Activated CD4-positive, alpha-beta memory T cell treated with anti-CD3 and anti-CD28 coated beads for 36 hours (primary cell): ENCODE measurements at regions of chr5 and their contacts with region 1.

Region 1: DNA sequence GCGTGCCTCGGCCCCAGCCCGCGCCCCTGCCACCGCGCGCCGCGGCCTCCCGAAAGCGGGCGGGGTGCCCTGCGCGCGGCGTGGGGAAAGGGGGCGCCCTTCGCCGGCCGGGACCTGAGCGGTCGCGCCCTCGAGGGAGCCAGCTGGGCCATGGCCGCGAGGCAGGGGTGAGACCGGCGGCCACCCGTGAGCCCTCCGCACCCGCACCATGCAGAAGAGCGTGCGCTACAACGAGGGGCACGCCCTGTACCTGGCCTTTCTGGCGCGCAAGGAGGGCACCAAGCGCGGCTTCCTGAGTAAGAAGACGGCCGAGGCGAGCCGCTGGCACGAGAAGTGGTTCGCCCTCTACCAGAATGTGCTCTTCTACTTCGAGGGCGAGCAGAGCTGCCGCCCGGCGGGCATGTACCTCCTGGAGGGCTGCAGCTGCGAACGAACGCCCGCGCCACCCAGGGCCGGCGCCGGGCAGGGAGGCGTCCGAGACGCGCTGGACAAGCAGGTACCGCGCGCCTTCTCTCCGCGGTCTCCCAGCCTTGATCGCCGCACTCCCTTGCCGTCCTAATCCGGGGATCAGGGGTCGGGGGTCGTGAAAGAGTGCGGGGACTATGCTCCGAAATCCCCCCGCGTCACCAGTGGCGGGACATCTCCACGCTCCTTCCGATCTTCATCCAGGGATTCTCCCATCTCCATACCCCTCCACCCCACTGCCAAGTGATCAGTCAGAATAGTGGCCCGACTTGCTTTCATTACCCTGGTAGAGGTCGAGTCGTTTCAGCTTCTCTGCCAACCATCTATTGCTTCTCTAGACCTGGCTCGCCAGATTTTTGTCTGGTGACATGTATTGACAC is 590 bp downstream of the RASGRF2 start:
- DNase-seq: peak; percentile 60
- H3K4me3 Mint-ChIP-seq: peak overlapping the region; percentile 81
- H3K27ac Mint-ChIP-seq: peak overlapping the region; percentile 56
- H3K4me1 Mint-ChIP-seq: peaks cover 55% of the 10 kb centered on the region
- H3K27me3 Mint-ChIP-seq: peaks cover 6% of the 10 kb centered on the region

Region 2: GRCh38 chr5:80407735-80408482 is 552.8 kb before region 1 on chr5 and contains the start of gene ZFYVE16:
- CTCF ChIA-PET with region 1: no interaction called
- POLR2A ChIA-PET with region 1: no interaction called
- intact Hi-C with region 1: loop called (anchors 10 kb)
- DNase-seq: peak; percentile 98
- H3K4me3 Mint-ChIP-seq: peak within 1 kb of the TSS; percentile 92
- H3K27ac Mint-ChIP-seq: peak within 1 kb of the TSS; percentile 97
- H3K4me1 Mint-ChIP-seq: peaks cover 16% of the 10 kb centered on the region
- H3K27me3 Mint-ChIP-seq: no peaks in the 10 kb centered on the region
- total RNA-seq, gene ZFYVE16: 12.1 to 15.7 TPM

Region 3: GRCh38 chr5:80871541-80871961 is 89.2 kb before region 1 on chr5:
- CTCF ChIA-PET with region 1: no interaction called
- POLR2A ChIA-PET with region 1: no interaction called
- intact Hi-C with region 1: loop called (anchors 1 kb)
- DNase-seq: peak; percentile 75
- H3K4me3 Mint-ChIP-seq: no peak overlapping the region
- H3K27ac Mint-ChIP-seq: peak overlapping the region; percentile 79
- H3K4me1 Mint-ChIP-seq: peaks cover 31% of the 10 kb centered on the region
- H3K27me3 Mint-ChIP-seq: no peaks in the 10 kb centered on the region

Region 4: GRCh38 chr5:80904533-80905187 is 56.1 kb before region 1 on chr5:
- CTCF ChIA-PET with region 1: no interaction called
- POLR2A ChIA-PET with region 1: no interaction called
- intact Hi-C with region 1: no loop called
- DNase-seq: no peak
- H3K4me3 Mint-ChIP-seq: no peak overlapping the region
- H3K27ac Mint-ChIP-seq: no peak overlapping the region
- H3K4me1 Mint-ChIP-seq: no peaks in the 10 kb centered on the region
- H3K27me3 Mint-ChIP-seq: no peaks in the 10 kb centered on the region

Region 5: DNA sequence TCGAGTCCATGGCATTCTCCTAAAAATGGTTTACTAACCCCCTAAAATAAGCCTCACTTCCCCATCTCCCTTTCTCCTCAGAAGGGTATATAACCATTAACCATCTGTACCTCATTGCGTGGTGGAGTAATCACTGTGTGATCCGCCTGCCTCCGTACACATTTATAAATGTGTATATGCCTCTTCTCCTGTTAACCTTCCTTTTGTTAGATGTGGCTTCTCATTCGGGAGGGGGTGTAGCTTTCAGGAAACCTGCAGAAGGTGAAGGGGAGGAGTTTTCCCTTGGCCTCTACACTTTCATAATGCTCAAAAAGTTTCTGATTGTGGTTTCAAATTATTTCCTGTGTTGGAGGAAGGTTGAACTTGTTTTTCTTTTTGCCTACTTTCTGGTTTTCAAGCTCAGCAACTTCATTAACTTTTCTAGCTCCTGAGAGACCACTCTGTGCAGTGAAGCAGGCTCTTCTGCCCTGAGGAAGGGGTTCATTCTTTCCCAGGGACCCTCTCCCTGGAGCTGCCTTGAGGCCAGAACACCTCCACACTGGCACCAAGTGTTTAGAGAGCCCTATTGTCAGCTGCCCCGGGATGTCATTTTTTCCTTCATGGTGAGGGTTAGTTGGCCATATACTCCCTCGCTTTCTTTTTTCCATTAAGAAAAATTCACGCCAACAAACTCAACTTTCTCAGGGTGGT is 46.3 kb after region 1 on chr5:
- CTCF ChIA-PET with region 1: interaction called, 10 read pairs
- POLR2A ChIA-PET with region 1: interaction called, 8 read pairs
- intact Hi-C with region 1: loop called (anchors 1 kb)
- DNase-seq: peak; percentile 66
- H3K4me3 Mint-ChIP-seq: peak overlapping the region; percentile 76
- H3K27ac Mint-ChIP-seq: peak overlapping the region; percentile 96
- H3K4me1 Mint-ChIP-seq: peaks cover 69% of the 10 kb centered on the region
- H3K27me3 Mint-ChIP-seq: no peaks in the 10 kb centered on the region

Region 6: DNA sequence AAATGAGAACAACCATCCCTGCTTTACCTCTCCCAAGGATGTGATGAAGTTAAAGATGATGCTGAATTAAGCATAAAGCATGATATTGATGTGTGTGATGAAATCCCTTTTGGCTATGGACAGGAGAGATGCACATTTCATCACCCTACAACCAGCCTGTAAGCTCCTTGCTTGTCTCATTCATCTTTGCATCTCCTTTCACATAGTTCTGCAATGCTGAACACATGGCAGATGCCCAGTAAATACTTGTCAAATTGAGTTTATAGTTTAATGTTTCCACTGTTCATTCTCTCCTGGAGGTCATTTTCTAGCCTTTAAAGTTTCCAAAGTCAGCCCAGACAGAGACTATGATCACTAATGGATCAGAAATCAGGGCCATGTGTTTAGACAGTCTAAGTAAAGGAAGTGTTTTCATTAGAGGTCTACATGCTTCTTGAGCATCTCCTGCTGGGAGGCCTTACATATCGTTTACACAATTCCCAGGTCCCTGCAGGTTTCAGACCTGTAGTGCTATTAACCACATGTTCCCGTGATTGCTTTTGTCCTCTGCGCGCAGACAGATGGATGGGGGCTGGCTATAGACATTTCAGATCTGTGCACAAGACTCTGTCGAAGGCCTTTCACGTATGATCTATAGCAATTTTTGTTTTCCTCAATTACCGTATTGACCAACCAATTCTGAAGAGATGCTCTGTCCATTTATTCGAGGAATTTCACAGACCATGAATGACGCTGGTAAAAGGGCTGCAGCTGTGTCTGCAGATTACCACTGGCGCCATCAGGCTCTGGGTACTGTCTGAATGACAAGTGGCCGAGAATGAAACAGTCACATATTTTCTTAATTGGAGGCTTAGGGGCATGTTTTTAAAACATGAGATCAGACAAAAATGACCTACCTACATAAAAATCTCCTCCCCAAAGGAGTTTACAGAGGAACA is 223.3 kb after region 1 on chr5:
- CTCF ChIA-PET with region 1: no interaction called
- POLR2A ChIA-PET with region 1: no interaction called
- intact Hi-C with region 1: loop called (anchors 5 kb)
- DNase-seq: no peak
- H3K4me3 Mint-ChIP-seq: no peak overlapping the region
- H3K27ac Mint-ChIP-seq: no peak overlapping the region
- H3K4me1 Mint-ChIP-seq: peaks cover 16% of the 10 kb centered on the region
- H3K27me3 Mint-ChIP-seq: no peaks in the 10 kb centered on the region